GM10248 (cell line): ENCODE measurements at regions of chr7 and their contacts with region 1.

Region 1: DNA sequence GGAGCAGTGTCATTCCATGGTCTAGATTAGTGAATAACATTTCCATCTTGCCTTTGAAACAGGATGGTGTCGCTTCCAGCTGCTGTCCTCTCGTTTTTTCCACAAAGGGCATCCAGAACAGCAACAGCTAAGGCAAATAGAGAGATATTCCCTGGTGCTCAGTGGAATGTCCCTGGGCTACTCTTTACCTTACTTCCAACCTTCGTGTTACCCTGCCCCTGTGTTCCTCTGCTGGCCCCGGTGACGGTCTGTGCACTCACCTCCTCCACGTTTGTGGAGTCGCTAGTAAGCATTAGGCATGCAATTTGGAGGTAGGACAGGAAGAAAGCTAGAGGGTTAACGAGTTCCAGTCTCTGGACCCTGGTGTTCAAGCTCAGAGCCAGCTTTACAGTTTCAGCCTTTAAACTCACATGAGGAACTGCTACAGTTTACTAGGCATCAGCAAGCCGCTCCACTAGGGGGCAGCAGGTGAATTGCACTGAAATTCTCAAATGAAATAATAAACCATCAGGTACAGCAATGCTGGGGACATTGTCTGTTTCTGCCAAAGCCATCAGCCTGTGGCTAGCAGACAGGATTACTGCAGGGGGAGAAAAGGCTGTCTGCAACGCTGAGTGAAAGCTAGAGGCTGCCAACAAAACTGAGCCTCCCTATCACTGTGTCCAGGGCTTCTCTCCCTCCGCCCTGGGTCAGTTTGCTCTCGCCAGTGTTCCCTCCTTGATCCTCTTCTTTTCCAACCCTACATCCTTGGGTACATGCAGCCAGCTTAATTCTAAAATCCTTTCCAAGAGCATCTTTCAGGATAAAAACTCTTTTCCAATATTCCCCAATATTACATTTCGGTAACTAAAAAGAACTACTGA is 9.0 kb downstream of the MRPL32 start:
- DNase-seq: peak; percentile 62
- CTCF ChIP-seq: peak; percentile 86

Region 2: DNA sequence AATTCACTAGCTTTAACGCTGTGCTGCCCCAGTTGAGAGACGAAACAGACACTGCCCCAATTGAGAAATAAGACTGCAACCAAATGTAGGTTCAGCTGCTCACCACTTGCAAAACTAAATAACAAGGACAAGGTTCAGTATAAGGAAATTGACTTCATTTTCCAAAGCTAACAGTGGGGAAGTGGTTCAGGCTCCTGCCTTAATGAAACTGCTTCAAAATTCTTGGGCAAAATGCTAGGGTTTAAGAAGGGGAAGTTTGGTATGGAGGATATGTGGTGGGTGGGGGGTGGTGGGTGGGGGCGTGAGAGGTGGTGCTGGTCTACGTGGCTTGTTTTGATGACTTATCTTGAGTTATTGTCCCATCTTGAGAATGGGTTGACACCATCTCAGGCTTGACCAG is 12.8 kb after region 1 on chr7:
- CTCF ChIA-PET with region 1: interaction called, 24 read pairs
- POLR2A ChIA-PET with region 1: no interaction called
- DNase-seq: no peak
- CTCF ChIP-seq: no peak

Region 3: DNA sequence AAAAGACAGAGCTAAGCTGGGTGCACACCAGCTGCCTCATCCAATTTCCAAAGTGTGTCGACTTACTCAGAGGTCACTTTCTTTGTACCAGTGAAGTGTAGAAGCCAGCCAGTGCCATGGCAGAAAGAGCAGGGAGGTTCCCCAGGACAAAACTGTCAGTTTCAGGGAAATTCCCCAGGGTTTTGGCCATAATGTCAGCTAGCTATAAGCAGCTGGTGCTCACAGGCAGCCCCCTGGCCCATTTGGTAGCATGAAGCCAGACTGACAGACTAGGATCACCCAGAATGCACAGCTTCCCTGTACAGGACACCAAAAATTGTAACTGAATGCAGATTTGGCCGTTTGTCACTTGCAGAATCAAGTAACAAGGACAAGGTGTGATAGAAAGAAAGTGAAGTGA is 19.5 kb after region 1 on chr7:
- CTCF ChIA-PET with region 1: interaction called, 24 read pairs
- POLR2A ChIA-PET with region 1: no interaction called
- DNase-seq: no peak
- CTCF ChIP-seq: no peak

Region 4: GRCh38 chr7:43148161-43148731 is 207.0 kb after region 1 on chr7:
- CTCF ChIA-PET with region 1: no interaction called
- POLR2A ChIA-PET with region 1: no interaction called
- DNase-seq: no peak
- CTCF ChIP-seq: no peak